Heart left ventricle (tissue), 16 donors: ENCODE measurements at regions of chr3 and their contacts with region 1.

Region 1: DNA sequence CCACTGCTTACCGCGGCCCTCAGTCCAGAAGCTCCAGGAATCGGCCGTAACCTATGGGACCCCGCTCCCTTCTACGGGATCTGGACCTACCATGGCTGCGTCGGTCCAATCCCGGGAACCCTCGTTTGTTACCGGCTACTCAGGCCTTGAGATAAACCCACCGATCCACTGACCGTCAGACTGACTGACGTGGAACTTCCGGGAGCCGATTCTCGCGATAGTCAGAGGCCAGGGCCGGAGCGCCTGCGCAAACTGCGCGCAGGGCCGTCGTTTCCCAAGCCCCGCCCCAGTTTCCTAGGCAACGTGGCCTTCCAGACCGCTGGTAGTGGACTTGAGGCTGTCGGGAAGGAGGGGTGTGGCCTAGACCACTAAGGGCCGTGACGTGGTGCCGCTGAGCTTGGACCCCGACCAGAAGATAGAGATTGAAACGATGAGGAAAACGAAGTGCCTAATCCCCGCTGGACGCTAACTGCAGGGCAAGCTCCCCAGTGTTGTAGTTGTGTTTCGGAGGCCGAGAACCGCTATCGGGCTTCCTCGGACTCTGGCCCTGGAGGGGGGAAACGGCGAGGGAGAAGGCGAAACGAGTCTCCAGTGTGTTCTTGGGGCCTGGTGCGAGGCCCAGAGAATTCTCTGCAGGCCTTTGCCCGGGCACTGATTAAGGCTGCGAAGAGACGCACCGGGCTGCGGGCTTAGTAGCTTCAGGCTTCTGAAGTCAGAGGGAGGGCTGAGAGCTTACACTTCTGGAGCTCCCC is at the start of gene COPB2:
- DNase-seq: peak; percentile 99 to 100 (median 100)
- ATAC-seq: peak; percentile 99
- H3K4me3 ChIP-seq: peak within 1 kb of the TSS; percentile 72 to 95 (median 79)
- H3K27ac ChIP-seq: peak within 1 kb of the TSS; percentile 80 to 98 (median 93)
- H3K4me1 ChIP-seq: peaks cover 0 to 59% (median 42%) of the 10 kb centered on the region in 12 donors
- H3K27me3 ChIP-seq: no peaks in the 10 kb centered on the region
- CTCF ChIP-seq: no peak
- POLR2A ChIP-seq: peak in 1 of 2 donors; percentile 82
- total RNA-seq, gene COPB2: 40.1 to 80.2 (median 62.3) TPM

Region 2: DNA sequence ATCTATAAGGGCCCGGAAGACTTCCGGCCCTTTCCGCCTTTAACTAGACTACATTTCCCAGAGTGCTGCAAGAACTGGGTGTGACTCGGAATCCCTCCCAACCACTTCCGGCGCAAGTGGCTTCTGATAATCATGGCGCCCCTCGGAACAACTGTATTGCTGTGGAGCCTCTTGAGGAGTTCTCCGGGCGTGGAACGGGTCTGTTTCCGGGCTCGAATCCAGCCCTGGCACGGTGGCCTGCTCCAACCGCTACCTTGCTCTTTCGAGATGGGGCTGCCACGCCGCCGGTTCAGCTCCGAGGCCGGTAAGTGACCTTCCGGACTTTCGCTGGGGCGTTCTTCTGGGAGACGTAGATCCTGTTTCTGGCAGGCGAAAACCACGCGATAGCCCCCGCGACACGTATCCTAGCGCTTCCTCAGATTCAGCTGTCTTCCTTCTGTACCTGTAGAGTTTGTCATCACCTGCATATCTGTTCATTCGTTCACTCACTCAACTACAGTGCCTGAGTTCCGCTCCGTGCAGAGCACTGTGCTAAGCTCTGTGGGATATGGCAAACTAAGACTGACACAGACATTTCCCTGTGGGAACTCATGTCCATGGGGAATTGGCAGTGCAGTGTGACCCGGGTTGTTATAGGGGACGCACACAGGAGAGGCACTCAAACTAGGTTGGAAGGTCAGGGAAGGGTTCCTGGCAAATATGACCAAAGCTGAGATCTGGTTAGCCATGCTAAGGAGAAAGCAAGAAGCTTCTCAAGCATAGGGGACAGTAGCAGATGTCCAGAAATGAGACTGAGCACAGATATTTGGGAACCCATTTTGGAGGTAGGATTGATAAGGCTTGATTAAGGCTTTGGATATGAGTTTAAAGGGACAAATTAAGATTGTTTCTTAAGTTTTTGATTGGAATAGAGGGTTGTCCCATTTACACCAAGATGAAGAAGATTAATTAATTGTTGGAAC is 45.5 kb before region 1 on chr3 and contains the start of gene MRPS22:
- intact Hi-C with region 1: loop called in 3 of 10 experiments (anchors 2 to 5 kb)
- DNase-seq: peak; percentile 80 to 86 (median 85)
- ATAC-seq: peak; percentile 96 to 98 (median 97)
- H3K4me3 ChIP-seq: peak within 1 kb of the TSS; percentile 63 to 97 (median 82)
- H3K27ac ChIP-seq: peak within 1 kb of the TSS; percentile 60 to 95 (median 85)
- H3K4me1 ChIP-seq: peaks cover 3 to 30% (median 16%) of the 10 kb centered on the region in 12 donors
- H3K27me3 ChIP-seq: peaks cover 0 to 5% (median 0%) of the 10 kb centered on the region in 9 donors
- CTCF ChIP-seq: no peak
- POLR2A ChIP-seq: peak in 1 of 2 donors; percentile 47
- total RNA-seq, gene MRPS22: 66.0 to 99.1 (median 74.1) TPM

Region 3: DNA sequence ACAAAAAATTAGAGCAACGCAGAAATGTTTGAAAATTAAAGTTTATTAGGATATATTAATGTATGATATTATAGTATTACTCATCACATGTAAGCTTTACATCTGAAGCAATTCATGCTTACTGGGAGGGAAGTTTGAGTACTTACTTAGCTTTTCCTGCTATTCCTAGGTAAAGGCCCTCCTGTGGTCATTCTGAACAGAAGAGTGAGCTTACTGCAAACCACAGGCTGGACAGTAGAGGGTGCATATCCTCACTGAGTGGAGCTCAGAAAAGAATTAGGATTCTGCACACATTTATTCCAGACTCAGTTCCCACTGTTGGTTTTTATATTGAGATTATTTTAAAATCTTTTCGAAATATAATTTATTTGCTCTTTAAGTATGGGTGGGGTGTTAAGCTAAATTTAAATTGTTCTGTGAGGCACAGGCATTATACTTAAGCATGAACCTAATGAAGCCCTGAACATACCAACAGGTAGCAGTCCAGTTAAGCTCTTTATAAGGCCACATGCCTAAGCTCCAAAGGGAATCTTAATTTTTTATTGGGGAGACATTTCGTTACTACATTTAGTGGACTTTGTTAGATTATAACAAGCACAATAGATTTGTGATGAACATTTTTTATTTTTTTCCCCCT is 35.6 kb before region 1 on chr3:
- intact Hi-C with region 1: loop called in 3 of 10 experiments (anchors 5 kb)
- DNase-seq: no peak
- ATAC-seq: peak in 3 of 4 donors; percentile 61 to 64 (median 63)
- H3K4me3 ChIP-seq: no peak overlapping the region
- H3K27ac ChIP-seq: no peak overlapping the region
- H3K4me1 ChIP-seq: peaks cover 0 to 3% (median 0%) of the 10 kb centered on the region in 12 donors
- H3K27me3 ChIP-seq: no peaks in the 10 kb centered on the region
- CTCF ChIP-seq: peak in 11 of 12 donors; percentile 13 to 79 (median 39)
- POLR2A ChIP-seq: no peak

Region 4: GRCh38 chr3:139416275-139416674 is 26.6 kb after region 1 on chr3:
- intact Hi-C with region 1: loop called in 1 of 10 experiments (anchors 2 kb)
- DNase-seq: no peak
- ATAC-seq: no peak
- H3K4me3 ChIP-seq: no peak overlapping the region
- H3K27ac ChIP-seq: no peak overlapping the region
- H3K4me1 ChIP-seq: peaks cover 0 to 3% (median 0%) of the 10 kb centered on the region in 12 donors
- H3K27me3 ChIP-seq: no peaks in the 10 kb centered on the region
- CTCF ChIP-seq: no peak
- POLR2A ChIP-seq: no peak